Right ventricle myocardium inferior (tissue), 1 donor: ENCODE measurements at regions of chr4 and their contacts with region 1.

Region 1: DNA sequence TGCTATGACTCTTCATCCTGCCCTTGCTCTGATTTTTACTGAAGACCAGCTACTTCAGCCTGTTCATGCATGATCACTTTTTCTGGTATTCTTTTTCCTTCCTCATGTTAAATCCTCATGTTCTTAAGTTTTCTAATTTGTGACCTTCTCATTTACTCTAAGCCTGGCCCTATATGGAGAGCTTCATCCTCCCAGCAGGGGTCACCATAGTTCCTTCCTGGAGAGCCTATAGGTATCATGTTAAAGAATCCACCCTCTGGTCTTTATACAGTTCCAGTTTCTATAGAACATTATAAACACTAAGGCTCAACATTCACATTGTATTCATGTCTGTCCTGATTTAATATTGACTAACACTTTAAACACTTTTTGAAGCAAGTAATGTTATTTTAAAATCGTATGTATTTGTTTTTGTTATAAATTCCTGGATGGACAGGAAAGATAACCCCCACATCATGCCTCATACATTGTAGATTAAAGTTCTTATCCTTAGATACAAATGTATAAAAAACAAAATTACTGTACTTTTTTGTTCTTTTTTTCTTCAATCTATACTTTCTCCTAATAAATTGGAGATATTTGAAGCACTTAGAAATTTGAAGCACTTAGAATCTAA is 53.8 kb upstream of the OTUD4 start:
- DNase-seq: no peak
- ATAC-seq: no peak

Region 2: DNA sequence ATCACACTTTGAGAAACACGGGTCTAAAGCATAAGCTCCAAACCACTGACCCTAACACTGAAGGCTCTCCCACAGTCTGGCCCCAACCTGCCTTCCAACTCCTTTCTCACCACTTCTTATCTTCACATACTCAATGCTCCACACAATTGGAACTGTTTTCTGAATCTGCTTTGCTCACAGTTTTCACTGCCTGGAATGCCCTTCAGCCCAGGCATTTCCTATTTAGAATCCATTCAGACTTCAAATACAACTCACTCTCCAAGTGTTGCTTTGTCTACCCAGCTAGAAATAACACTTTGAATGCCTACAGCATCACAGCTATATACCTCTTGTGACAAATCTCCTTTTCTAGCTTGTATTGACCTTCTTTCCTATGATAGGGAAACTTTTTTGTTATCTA is 64.0 kb before region 1 on chr4:
- intact Hi-C with region 1: no loop called
- DNase-seq: no peak
- ATAC-seq: no peak

Region 3: DNA sequence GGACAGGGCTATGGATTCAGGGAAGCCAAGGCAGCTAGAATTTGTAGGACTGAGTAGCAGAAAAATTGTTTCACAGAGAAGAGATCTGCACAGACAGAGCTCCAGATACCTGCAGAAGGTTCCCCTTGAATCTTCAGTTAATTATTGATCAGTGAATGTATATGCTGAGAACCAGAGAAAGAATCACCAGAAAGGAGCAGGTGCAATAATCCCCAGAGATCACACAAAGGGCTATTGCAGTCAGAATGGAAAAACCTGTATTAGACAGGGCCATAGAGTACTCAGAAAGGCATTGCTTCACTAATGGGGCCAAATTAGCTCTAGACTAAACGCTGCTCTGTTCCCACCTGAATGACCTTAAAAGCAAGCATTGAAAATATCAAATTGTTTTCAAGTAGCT is 212.0 kb after region 1 on chr4:
- intact Hi-C with region 1: no loop called
- DNase-seq: no peak
- ATAC-seq: no peak

Region 4: DNA sequence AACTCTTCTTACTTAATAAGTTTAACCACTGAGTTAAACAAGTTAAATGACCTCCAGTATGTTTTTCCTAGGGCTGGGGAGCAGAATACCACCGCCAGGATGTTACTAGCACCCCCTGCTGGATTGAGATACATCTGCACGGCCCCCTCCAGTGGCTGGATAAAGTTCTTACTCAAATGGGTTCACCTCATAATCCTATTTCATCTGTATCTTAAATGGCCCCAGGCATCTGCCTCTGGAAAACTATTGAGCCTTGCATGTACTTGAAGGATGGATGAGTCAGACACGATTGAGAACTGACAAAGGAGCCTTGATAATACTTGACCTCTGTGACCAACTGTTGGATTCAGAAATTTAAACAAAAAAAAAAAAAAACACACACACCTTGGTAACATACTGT is 323.5 kb after region 1 on chr4:
- intact Hi-C with region 1: loop called (anchors 2 kb)
- DNase-seq: peak; percentile 63
- ATAC-seq: peak; percentile 81

Region 5: GRCh38 chr4:145609481-145610427 is 375.6 kb after region 1 on chr4:
- intact Hi-C with region 1: loop called (anchors 5 kb)
- DNase-seq: no peak
- ATAC-seq: no peak